ENCODE measurements at regions of chr2 and their contacts with region 1.

Region 1: DNA sequence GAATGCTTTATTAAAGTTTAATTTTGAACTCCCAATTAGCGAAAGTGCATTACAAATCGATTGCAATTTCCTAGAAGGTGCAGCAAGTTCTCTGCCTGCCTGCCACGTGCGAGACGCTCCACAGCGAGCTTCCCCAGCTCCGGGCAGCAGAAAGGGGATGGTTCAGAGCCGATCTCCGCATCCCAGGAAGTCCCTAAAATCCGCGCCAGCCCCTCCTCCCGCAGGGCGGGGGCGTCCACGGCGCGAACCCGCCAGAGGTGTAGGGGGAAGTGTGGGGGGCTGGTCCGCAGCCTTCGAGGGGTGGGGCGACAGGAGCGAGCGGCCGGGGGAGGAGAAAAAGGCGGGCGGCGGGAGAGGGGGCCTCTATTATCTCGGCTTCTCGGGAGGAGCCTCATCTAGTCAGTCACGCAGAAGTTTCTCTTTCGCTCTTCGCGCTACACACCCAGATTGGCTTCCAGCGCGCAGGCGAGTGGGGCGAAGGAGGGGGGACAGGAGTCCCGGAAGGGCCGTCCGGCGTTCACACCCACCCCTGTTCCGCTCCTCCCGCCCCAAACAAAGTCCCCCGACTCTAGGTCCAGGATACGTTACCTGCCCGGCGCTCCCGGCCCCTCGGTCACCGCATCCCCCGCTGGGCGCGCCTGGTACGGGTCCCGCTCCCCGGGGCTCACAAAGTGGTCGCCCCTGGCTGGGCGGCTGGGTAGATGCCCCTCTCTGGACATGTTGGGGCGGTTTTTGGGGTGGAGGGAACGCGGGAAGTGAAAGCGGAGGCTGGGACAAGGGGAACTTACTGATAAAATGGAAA is 9.1 kb upstream of the NR4A2 start:
- DNase-seq: peak; percentile 89
- H3K4me3 ChIP-seq: peak overlapping the region; percentile 90
- H3K27ac ChIP-seq: peak overlapping the region; percentile 97
- H3K27me3 ChIP-seq: no peaks in the 10 kb centered on the region
- CTCF ChIP-seq: no peak

Region 2: GRCh38 chr2:156589381-156590079 is 247.9 kb after region 1 on chr2:
- in situ Hi-C with region 1: loop called (anchors 25 kb)
- DNase-seq: peak; percentile 21
- H3K4me3 ChIP-seq: no peak overlapping the region
- H3K27ac ChIP-seq: no peak overlapping the region
- H3K27me3 ChIP-seq: no peaks in the 10 kb centered on the region
- CTCF ChIP-seq: peak; percentile 57

Region 3: GRCh38 chr2:156892467-156893281 is 551.0 kb after region 1 on chr2:
- in situ Hi-C with region 1: loop called (anchors 25 kb)
- DNase-seq: peak; percentile 16
- H3K4me3 ChIP-seq: peak overlapping the region; percentile 49
- H3K27ac ChIP-seq: no peak overlapping the region
- H3K27me3 ChIP-seq: no peaks in the 10 kb centered on the region
- CTCF ChIP-seq: peak; percentile 50

Region 4: DNA sequence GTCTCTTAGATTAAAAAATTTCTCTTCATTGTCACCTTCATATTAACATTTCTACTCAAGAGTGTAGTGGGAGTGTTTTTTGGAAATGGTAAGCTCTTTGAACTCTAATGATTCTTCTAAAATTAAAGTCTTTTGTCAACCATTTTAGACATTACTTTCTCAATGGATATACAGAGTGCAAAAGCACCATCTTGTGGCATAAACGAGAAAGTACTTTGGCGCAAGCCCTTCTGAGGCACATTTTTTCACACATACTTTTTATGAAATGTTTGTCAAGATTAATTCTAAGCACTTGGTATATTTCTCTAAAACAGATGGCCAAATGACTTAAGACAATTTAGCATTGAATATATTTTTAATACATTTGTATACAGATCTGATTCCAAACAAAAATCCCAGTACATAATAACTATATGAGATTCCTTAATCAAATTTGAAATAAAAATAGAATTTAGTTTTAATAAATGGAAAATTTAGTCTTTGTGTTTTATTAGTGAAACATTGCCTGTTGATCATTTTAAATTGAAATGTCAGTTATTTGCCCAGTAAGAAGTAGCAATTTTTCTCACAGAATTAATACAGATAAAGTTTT is 852.5 kb after region 1 on chr2:
- in situ Hi-C with region 1: loop called (anchors 25 kb)
- DNase-seq: peak; percentile 67
- H3K4me3 ChIP-seq: no peak overlapping the region
- H3K27ac ChIP-seq: peak overlapping the region; percentile 19
- H3K27me3 ChIP-seq: no peaks in the 10 kb centered on the region
- CTCF ChIP-seq: peak; percentile 73

Measured in brain microvascular endothelial cell (primary cell).